H1 (cell line): ENCODE measurements at regions of chr19 and their contacts with region 1.

Region 1: DNA sequence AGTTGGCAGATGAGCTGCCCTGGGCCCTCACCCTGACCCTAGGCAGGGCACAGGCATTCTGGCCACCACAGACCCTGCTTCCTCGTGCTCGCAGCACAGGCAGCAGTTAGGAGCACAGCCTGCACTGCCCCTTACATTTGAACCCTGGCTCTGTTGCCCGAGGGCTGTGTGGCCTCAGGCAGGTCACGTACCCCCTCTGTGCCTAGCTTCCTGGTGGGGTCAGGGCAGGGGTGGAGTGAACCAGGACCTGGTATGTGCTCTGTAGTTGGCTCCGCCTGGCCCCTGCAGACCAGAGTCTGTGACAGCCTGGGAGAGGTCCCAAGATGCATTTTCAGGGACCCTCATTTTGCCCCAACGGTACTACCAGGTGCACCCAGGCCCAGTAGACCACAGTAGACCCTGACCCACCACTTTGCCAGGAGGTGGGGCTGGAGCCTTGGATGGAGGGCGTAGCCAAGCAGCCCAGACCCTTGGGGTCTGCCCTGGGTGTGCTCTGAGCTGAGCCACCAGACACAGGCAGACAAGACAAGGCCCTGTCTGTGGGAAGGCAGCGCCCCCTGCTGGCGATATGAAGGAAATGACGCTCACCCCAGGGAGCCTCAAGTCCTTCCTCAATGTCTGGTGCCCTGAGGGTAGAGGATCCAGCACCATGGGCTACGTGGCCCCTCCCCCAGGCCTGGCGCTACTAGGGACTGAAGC is 9.1 kb downstream of the LYL1 start:
- DNase-seq: peak; percentile 79 to 89
- H3K4me3 ChIP-seq: no peak overlapping the region
- H3K27ac ChIP-seq: no peak overlapping the region
- H3K4me1 ChIP-seq: peaks cover 0 to 18% (median 16%) of the 10 kb centered on the region in 4 experiments; a peak in 5 of 7 replicates
- H3K27me3 ChIP-seq: peaks cover 9 to 71% (median 45%) of the 10 kb centered on the region in 4 experiments
- CTCF ChIP-seq: peak; percentile 96
- EP300 ChIP-seq: no peak
- POLR2A ChIP-seq: no peak
- RAD21 ChIP-seq: peak; percentile 99

Region 2: GRCh38 chr19:12965017-12965811 is 128.3 kb before region 1 on chr19:
- CTCF ChIA-PET with region 1: interaction called, 78 read pairs
- POLR2A ChIA-PET with region 1: interaction called, 8 read pairs
- DNase-seq: peak; percentile 59 to 97
- H3K4me3 ChIP-seq: peak overlapping the region in 3 of 4 experiments; percentile 27 to 54 (median 46); a peak in 5 of 8 replicates
- H3K27ac ChIP-seq: peak overlapping the region; percentile 34; the same call in 1 of the 2 replicates
- H3K4me1 ChIP-seq: peaks cover 0 to 6% (median 2%) of the 10 kb centered on the region in 4 experiments; a peak in 2 of 7 replicates
- H3K27me3 ChIP-seq: no peaks in the 10 kb centered on the region
- CTCF ChIP-seq: peak; percentile 92 to 99 (median 99)
- EP300 ChIP-seq: no peak
- POLR2A ChIP-seq: no peak; a peak in 1 of 3 replicates
- RAD21 ChIP-seq: peak; percentile 54 to 65

Region 3: GRCh38 chr19:13002166-13002898 is 91.2 kb before region 1 on chr19:
- CTCF ChIA-PET with region 1: interaction called, 38 read pairs
- POLR2A ChIA-PET with region 1: interaction called, 3 read pairs
- DNase-seq: no peak
- H3K4me3 ChIP-seq: no peak overlapping the region
- H3K27ac ChIP-seq: no peak overlapping the region
- H3K4me1 ChIP-seq: peaks cover 0 to 6% (median 0%) of the 10 kb centered on the region in 4 experiments; a peak in 1 of 7 replicates
- H3K27me3 ChIP-seq: peaks cover 16 to 94% (median 74%) of the 10 kb centered on the region in 4 experiments
- CTCF ChIP-seq: no peak
- EP300 ChIP-seq: no peak
- POLR2A ChIP-seq: no peak
- RAD21 ChIP-seq: no peak

Region 4: DNA sequence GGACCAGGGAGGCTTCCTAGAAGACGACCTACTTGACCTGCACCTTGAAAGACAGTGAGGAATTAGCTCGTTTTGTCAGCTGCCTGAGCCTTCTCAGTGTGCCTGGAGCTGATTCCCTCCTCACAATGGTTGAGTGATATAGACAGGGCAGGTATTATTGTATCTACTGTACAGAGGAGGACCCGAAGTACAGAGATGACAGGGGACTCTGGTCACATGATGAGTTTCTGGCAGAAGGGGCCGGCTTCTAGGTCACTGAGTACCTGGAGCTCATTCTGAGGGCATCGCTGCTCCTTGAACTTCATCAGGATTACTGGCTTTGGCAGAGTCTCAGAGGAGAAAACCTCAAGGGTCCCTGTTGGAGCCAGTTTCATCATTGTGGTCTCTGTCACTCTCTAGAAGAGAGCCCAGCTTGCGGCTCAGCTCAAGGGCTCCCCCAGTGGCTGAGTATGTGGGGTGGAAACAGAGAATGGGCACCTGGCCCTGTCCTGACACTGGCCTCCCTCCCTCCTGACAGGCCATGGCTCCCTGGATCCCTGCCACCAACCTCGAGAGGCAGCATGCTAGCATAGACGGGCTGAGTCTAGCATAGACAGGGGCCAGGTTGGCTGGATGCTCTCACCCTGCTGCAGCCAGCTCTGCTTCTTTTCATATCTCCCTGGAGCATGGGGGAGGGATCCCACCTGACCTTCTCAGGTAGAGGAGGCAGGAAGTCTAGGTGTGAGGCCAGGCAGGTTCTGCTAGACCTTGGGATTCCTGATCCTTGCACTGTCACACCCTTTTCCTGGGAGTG is 59.5 kb before region 1 on chr19:
- CTCF ChIA-PET with region 1: interaction called, 1,145 read pairs
- POLR2A ChIA-PET with region 1: interaction called, 3 read pairs
- DNase-seq: peak in 1 of 2 experiments; percentile 86
- H3K4me3 ChIP-seq: no peak overlapping the region
- H3K27ac ChIP-seq: no peak overlapping the region
- H3K4me1 ChIP-seq: no peaks in the 10 kb centered on the region
- H3K27me3 ChIP-seq: peaks cover 10 to 67% (median 42%) of the 10 kb centered on the region in 4 experiments
- CTCF ChIP-seq: peak; percentile 86 to 95 (median 93)
- EP300 ChIP-seq: no peak
- POLR2A ChIP-seq: no peak
- RAD21 ChIP-seq: peak; percentile 59 to 74; a peak in 3 of 4 replicates

Region 5: GRCh38 chr19:13104360-13104847 is 10.8 kb after region 1 on chr19:
- CTCF ChIA-PET with region 1: interaction called, 31 read pairs
- POLR2A ChIA-PET with region 1: interaction called, 14 read pairs
- DNase-seq: peak in 1 of 2 experiments; percentile 95
- H3K4me3 ChIP-seq: no peak overlapping the region
- H3K27ac ChIP-seq: no peak overlapping the region
- H3K4me1 ChIP-seq: peaks cover 0 to 23% (median 9%) of the 10 kb centered on the region in 4 experiments; a peak in 5 of 7 replicates
- H3K27me3 ChIP-seq: peaks cover 16 to 34% (median 28%) of the 10 kb centered on the region in 4 experiments
- CTCF ChIP-seq: peak; percentile 83 to 95 (median 86)
- EP300 ChIP-seq: no peak
- POLR2A ChIP-seq: no peak; a peak in 1 of 3 replicates
- RAD21 ChIP-seq: peak; percentile 34 to 58

Region 6: DNA sequence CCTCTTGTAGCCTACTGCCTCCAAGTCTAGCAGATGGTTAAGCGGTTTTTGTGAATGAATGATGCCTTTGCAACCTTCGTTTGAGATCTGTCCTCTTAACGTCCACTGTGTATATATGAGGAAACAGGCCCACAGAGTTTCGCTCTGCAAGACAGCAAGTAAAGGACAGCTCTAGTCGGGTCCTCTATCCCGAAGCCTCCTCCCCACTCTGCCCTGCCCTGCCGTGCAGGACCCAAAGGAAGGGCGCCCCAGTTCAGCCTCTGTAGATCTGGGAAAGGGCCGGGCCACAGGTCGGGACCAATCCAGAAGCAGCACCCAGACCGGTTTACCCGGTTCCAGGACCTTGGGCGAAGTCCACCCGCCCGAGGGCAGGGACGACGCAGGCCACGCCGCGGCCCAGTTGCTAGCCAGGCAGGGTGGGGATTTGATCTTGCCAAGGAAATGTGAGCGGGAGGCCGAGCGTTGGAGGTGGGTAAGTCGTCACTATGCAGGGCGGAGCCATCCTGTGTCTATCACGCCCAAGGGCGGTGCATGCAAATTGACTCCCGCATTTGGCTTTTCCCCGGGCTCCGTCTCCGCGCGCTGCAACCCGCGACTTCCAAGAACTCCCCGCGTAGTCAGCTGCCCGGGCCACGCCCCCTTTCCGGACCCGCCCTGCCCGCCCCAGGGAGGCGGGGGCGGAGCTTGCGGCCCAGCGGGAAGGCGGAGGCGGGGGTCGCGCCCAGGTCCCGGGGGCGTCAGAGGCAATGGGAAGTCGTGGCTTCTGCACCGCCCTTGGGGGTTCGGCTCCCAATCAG is 69.2 kb after region 1 on chr19:
- CTCF ChIA-PET with region 1: interaction called, 4 read pairs
- POLR2A ChIA-PET with region 1: interaction called, 11 read pairs
- DNase-seq: peak; percentile 92 to 96
- H3K4me3 ChIP-seq: peak overlapping the region; percentile 13 to 62 (median 46); a peak in 7 of 8 replicates
- H3K27ac ChIP-seq: peak overlapping the region; percentile 95
- H3K4me1 ChIP-seq: peaks cover 16 to 31% (median 18%) of the 10 kb centered on the region in 4 experiments
- H3K27me3 ChIP-seq: no peaks in the 10 kb centered on the region
- CTCF ChIP-seq: no peak
- EP300 ChIP-seq: no peak
- POLR2A ChIP-seq: peak; percentile 17 to 66; a peak in 2 of 3 replicates
- RAD21 ChIP-seq: no peak; a peak in 1 of 4 replicates